ENCODE measurements at regions of chr1 and their contacts with region 1.

Region 1: DNA sequence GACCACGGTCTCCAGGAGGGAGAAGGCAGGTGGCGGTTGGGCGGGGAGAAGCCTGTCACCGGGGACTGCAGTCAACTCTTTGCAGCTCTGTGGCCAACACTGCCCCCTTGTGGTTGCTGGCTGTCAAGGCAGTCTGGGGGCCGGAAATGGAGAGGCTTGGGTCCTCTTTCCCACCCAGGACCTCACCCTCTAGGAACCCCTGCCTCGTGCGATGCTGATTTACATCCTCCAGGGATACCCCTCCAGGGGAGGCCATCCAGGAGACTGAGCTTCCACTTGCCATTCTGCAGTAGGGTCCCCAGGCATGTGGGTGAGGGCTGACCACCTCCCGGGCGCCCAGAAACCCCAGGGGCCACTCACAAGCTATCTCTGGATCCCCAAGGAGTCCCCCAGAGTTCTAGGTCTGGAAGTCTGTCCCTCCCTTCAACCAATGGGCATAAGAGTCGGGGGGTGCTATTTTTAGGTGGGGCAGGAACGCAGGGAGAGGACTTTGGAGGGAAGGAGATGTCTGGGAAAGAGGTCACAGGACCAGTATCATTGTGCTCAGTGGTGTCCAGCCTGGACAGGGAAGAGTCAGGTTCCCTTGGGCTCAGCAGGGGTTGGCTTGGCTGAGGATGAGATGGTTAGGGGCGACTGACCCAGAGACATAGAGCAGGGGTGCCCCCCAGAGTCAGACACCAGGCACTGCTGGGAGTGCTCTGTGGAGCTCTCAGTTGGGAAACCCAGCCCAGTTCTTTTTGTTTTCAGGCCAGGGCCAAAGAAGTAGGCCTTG is 7.1 kb upstream of the GPR61 start:
- DNase-seq: peak; percentile 88
- ATAC-seq: peak; percentile 90
- H3K4me3 ChIP-seq: peak overlapping the region in 4 of 5 experiments; percentile 37 to 67 (median 52)
- H3K4me3 Mint-ChIP-seq: peak overlapping the region; percentile 90
- H3K27ac ChIP-seq: peak overlapping the region in 1 of 2 donors; percentile 21
- H3K27ac Mint-ChIP-seq: peak overlapping the region; percentile 87
- H3K4me1 ChIP-seq: peaks cover 4 to 11% of the 10 kb centered on the region in 2 donors
- H3K4me1 Mint-ChIP-seq: peaks cover 11% of the 10 kb centered on the region
- H3K27me3 ChIP-seq: no peaks in the 10 kb centered on the region
- H3K27me3 Mint-ChIP-seq: no peaks in the 10 kb centered on the region
- CTCF ChIP-seq: peak; percentile 93

Region 2: DNA sequence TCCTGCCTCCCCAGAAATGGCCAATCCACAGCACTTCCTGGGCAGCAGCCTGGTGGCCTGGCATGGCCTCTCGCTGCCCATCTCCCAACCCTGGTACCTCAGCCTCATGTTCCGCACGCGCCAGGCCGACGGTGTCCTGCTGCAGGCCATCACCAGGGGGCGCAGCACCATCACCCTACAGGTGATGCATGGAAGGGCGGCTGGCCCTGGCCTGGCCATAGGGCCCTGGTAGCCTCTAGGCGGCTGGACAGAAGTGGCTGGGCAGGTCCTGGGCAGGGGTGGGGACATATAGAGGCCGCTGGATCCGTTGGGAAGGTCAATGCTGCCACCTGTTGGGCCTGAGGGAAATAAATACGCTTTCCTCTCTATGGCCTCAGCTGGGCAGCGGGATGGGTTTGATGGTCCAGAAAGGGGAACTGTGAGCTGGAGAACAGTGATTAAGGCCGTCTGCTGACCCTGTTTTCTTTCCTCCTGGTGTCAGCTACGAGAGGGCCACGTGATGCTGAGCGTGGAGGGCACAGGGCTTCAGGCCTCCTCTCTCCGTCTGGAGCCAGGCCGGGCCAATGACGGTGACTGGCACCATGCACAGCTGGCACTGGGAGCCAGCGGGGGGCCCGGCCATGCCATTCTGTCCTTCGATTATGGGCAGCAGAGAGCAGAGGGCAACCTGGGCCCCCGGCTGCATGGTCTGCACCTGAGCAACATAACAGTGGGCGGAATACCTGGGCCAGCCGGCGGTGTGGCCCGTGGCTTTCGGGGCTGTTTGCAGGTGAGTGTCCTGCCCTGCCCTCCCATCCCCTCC is 268.8 kb before region 1 on chr1:
- CTCF ChIA-PET with region 1: interaction called, 18 read pairs
- POLR2A ChIA-PET with region 1: no interaction called
- intact Hi-C with region 1: no loop called
- DNase-seq: peak; percentile 80
- ATAC-seq: peak; percentile 92
- H3K4me3 ChIP-seq: no peak overlapping the region
- H3K4me3 Mint-ChIP-seq: no peak overlapping the region
- H3K27ac ChIP-seq: no peak overlapping the region
- H3K27ac Mint-ChIP-seq: no peak overlapping the region
- H3K4me1 ChIP-seq: peaks cover 0 to 3% of the 10 kb centered on the region in 2 donors
- H3K4me1 Mint-ChIP-seq: peaks cover 4% of the 10 kb centered on the region
- H3K27me3 ChIP-seq: peaks cover 0 to 4% (median 0%) of the 10 kb centered on the region in 4 experiments
- H3K27me3 Mint-ChIP-seq: peaks cover 4% of the 10 kb centered on the region
- CTCF ChIP-seq: peak; percentile 93

Measured in B cell (primary cell).